CD14-positive monocyte (primary cell): ENCODE measurements at regions of chr5 and their contacts with region 1.

Region 1: DNA sequence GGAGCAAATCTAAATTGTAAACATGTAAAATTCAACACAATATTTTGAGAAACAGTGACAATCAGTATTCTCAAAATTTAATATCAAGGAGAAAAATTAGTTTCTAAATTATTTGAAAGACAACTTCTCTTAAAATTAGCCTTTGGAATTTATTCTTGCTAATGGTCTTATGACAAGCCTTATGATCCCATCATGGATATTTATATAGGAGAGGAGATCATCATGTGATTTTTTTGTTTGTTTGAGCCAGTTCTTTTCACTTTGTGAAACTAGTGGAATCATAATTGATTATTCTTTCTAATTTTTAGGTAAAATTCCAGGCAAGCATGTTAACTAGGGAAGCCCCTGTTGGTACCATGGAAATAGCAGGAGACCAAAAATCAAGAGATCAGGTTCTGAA is 24.7 kb downstream of the DMXL1 start:
- DNase-seq: no peak
- H3K4me3 ChIP-seq: no peak overlapping the region
- H3K4me3 Mint-ChIP-seq: no peak overlapping the region
- H3K27ac ChIP-seq: no peak overlapping the region
- H3K27ac Mint-ChIP-seq: no peak overlapping the region
- H3K4me1 ChIP-seq: peaks cover 7 to 9% of the 10 kb centered on the region in 2 donors
- H3K4me1 Mint-ChIP-seq: peaks cover 11% of the 10 kb centered on the region
- H3K27me3 ChIP-seq: no peaks in the 10 kb centered on the region
- H3K27me3 Mint-ChIP-seq: no peaks in the 10 kb centered on the region
- CTCF ChIP-seq: no peak

Region 2: GRCh38 chr5:119131530-119132313 is 36.1 kb after region 1 on chr5:
- intact Hi-C with region 1: no loop called
- DNase-seq: no peak
- H3K4me3 ChIP-seq: no peak overlapping the region
- H3K4me3 Mint-ChIP-seq: no peak overlapping the region
- H3K27ac ChIP-seq: no peak overlapping the region
- H3K27ac Mint-ChIP-seq: no peak overlapping the region
- H3K4me1 ChIP-seq: no peaks in the 10 kb centered on the region
- H3K4me1 Mint-ChIP-seq: no peaks in the 10 kb centered on the region
- H3K27me3 ChIP-seq: no peaks in the 10 kb centered on the region
- H3K27me3 Mint-ChIP-seq: peaks cover 0 to 3% (median 1%) of the 10 kb centered on the region in 3 donors
- CTCF ChIP-seq: no peak

Region 3: DNA sequence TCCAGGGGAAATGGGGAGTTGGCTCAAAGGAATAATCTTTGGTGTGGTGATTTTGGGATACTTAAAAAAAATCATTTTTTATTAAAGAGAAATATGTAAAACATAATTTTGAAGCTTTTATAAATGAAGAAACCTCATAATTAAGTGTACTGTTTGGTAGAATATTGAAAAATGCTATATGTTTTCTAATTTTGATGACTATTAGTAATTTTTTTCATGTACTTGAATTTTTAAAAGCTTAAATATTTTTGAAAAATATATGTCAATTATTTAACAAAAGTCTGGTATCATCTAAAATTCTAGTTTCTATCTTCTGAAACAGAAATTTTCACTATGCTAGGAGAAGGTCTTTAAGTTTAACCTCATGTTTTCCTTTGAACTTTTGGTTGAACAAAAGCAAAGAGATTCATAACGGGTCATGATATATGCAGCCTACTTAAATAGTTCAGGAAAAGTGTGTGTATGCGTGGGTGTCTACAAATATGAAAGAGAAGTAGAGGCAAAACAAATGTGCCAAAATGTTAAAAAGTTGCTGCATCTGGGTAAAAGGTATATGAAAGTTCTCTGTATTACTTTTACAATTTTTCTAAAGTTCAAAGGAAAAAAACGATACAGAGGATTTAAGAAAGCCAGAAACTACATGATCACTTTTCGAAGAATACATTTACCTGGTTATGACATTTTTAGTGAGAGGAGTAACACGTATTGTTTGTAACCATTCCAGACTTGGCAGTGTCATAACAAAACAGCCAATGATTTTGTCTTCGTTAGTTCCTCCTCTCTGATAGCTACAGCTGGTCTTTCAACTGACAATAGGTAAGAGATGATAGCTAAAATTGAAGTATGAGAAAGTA is 142.9 kb after region 1 on chr5:
- intact Hi-C with region 1: loop called in 1 of 2 experiments (anchors 10 kb)
- DNase-seq: no peak
- H3K4me3 ChIP-seq: no peak overlapping the region
- H3K4me3 Mint-ChIP-seq: no peak overlapping the region
- H3K27ac ChIP-seq: no peak overlapping the region
- H3K27ac Mint-ChIP-seq: no peak overlapping the region
- H3K4me1 ChIP-seq: no peaks in the 10 kb centered on the region
- H3K4me1 Mint-ChIP-seq: peaks cover 6% of the 10 kb centered on the region
- H3K27me3 ChIP-seq: no peaks in the 10 kb centered on the region
- H3K27me3 Mint-ChIP-seq: no peaks in the 10 kb centered on the region
- CTCF ChIP-seq: no peak